ENCODE measurements at regions of chr1 and their contacts with region 1.

Region 1: GRCh38 chr1:8202182-8202905 is 115.6 kb upstream of the SLC45A1 start:
- DNase-seq: peak; percentile 75
- H3K4me3 ChIP-seq: no peak overlapping the region
- H3K27ac ChIP-seq: peak overlapping the region; percentile 85 to 88
- H3K4me1 ChIP-seq: peaks cover 19% of the 10 kb centered on the region
- H3K27me3 ChIP-seq: no peaks in the 10 kb centered on the region
- CTCF ChIP-seq: peak in 1 of 4 experiments; percentile 13
- POLR2A ChIP-seq: peak; percentile 18

Region 2: GRCh38 chr1:8121261-8122170 is 80.8 kb before region 1 on chr1:
- intact Hi-C with region 1: loop called (anchors 5 kb)
- DNase-seq: peak; percentile 78
- H3K4me3 ChIP-seq: no peak overlapping the region
- H3K27ac ChIP-seq: peak overlapping the region; percentile 80 to 81
- H3K4me1 ChIP-seq: no peaks in the 10 kb centered on the region
- H3K27me3 ChIP-seq: no peaks in the 10 kb centered on the region
- CTCF ChIP-seq: no peak
- POLR2A ChIP-seq: no peak

Region 3: DNA sequence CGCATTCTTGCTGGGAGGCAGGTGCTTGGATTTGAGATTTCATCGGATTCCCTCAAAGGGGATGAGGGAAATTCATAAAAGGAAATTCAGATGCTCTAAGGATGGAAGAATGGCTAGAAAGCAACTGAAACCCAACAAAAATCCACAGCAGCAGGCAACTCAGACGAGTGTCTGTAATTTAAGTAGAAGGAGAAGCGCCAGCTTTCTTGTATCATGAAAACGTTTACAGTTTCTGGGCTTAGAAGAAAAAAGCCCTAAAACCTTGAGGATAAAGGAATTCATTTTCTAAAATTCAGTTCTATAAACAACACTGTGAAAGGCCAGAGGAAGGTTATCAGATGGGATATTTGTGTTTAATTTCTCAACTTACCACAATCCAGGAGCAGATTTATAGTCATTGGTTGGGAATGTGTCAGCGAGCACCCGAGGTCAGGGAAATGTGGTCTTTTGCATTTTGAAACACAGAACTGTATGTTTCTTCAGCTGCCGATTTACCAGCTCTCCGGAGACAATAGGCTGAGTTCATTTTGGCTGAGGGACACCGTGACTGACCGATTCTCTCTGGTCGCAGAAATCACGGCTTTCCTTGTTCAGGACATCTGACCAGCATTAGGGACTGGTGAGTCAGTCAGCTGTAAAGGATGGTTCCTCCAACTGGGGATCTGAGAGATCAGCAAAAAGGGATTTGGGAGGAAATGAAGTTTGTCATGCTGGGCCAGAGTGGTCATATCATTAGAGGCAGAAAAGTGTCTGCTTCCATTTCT is 64.7 kb before region 1 on chr1:
- intact Hi-C with region 1: loop called (anchors 5 kb)
- DNase-seq: no peak
- H3K4me3 ChIP-seq: no peak overlapping the region
- H3K27ac ChIP-seq: peak overlapping the region; percentile 5 to 26
- H3K4me1 ChIP-seq: no peaks in the 10 kb centered on the region
- H3K27me3 ChIP-seq: no peaks in the 10 kb centered on the region
- CTCF ChIP-seq: no peak
- POLR2A ChIP-seq: no peak

Region 4: GRCh38 chr1:8259498-8260290 is 57.4 kb after region 1 on chr1:
- intact Hi-C with region 1: loop called (anchors 1 kb)
- DNase-seq: peak; percentile 91
- H3K4me3 ChIP-seq: peak overlapping the region in 1 of 2 donors; percentile 9
- H3K27ac ChIP-seq: peak overlapping the region; percentile 90 to 94
- H3K4me1 ChIP-seq: peaks cover 16% of the 10 kb centered on the region
- H3K27me3 ChIP-seq: no peaks in the 10 kb centered on the region
- CTCF ChIP-seq: no peak
- POLR2A ChIP-seq: no peak

Region 5: GRCh38 chr1:8477166-8477982 is 275.0 kb after region 1 on chr1:
- intact Hi-C with region 1: no loop called
- DNase-seq: no peak
- H3K4me3 ChIP-seq: no peak overlapping the region
- H3K27ac ChIP-seq: peak overlapping the region in 1 of 2 donors; percentile 9
- H3K4me1 ChIP-seq: no peaks in the 10 kb centered on the region
- H3K27me3 ChIP-seq: no peaks in the 10 kb centered on the region
- CTCF ChIP-seq: no peak
- POLR2A ChIP-seq: no peak

Measured in prostate gland (tissue), 2 donors.